T-cell (primary cell): ENCODE measurements at regions of chr1 and their contacts with region 1.

Region 1: GRCh38 chr1:86704458-86704971 is at the start of gene SH3GLB1:
- DNase-seq: peak; percentile 79 to 94 (median 87)
- ATAC-seq: peak; percentile 91 to 93 (median 92)
- H3K4me3 ChIP-seq: peak within 1 kb of the TSS; percentile 93 to 99
- H3K4me3 Mint-ChIP-seq: peak within 1 kb of the TSS; percentile 90 to 98 (median 98)
- H3K27ac ChIP-seq: peak within 1 kb of the TSS; percentile 87
- H3K27ac Mint-ChIP-seq: peak within 1 kb of the TSS; percentile 96 to 97
- H3K4me1 ChIP-seq: peaks cover 4 to 17% of the 10 kb centered on the region in 2 experiments
- H3K4me1 Mint-ChIP-seq: peaks cover 48 to 65% (median 55%) of the 10 kb centered on the region in 3 donors
- H3K27me3 ChIP-seq: no peaks in the 10 kb centered on the region
- H3K27me3 Mint-ChIP-seq: no peaks in the 10 kb centered on the region
- total RNA-seq, gene SH3GLB1: 42.2 to 48.0 (median 45.8) TPM

Region 2: DNA sequence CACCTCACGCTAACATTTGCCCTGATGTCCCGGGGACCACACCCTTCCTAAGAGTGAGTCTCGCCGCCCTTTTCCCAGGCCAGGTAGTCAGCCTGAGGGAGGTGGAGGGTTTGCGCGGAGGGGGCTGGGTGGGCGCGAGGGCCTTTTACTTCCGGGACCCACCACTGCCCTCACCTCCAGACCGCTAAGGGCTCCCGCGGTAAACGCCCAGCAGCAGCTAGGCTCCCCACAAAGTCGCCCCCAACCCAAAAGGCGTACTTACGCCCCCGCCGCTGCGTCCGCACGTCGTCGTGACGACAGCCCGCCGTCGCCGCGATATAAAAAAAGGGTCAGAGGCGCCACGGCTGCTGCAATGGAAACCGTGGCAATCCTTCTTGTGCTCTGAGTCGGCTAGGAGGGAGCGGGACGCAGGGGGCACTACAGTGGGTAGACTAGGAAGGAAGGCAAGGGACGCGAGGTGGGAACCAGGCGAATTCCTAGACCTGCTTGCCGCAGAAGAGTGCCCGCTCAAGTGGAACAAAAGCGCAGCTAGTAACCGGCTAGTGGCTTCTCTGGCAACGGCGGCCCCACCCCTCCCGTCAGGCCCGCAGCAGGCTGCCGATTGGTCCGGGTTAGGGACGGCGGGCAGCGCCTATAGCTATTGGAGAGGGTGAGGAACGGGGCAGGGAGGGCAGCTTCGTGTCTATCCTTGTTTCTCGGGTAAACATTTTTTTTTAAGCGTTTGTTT is 308.6 kb before region 1 on chr1 and contains the start of gene ODF2L:
- CTCF ChIA-PET with region 1: interaction called in 1 of 2 experiments, 18 read pairs
- POLR2A ChIA-PET with region 1: interaction called in 1 of 2 experiments, 10 read pairs
- DNase-seq: peak; percentile 73 to 92 (median 85)
- ATAC-seq: peak; percentile 99 to 100 (median 100)
- H3K4me3 ChIP-seq: peak within 1 kb of the TSS; percentile 93 to 98
- H3K4me3 Mint-ChIP-seq: peak within 1 kb of the TSS; percentile 91 to 98 (median 95)
- H3K27ac ChIP-seq: peak within 1 kb of the TSS; percentile 94
- H3K27ac Mint-ChIP-seq: peak within 1 kb of the TSS; percentile 93 to 97
- H3K4me1 ChIP-seq: peaks cover 7 to 19% of the 10 kb centered on the region in 2 experiments
- H3K4me1 Mint-ChIP-seq: peaks cover 53 to 57% (median 54%) of the 10 kb centered on the region in 3 donors
- H3K27me3 ChIP-seq: no peaks in the 10 kb centered on the region
- H3K27me3 Mint-ChIP-seq: no peaks in the 10 kb centered on the region
- total RNA-seq, gene ODF2L: 52.5 to 83.9 (median 67.9) TPM

Region 3: DNA sequence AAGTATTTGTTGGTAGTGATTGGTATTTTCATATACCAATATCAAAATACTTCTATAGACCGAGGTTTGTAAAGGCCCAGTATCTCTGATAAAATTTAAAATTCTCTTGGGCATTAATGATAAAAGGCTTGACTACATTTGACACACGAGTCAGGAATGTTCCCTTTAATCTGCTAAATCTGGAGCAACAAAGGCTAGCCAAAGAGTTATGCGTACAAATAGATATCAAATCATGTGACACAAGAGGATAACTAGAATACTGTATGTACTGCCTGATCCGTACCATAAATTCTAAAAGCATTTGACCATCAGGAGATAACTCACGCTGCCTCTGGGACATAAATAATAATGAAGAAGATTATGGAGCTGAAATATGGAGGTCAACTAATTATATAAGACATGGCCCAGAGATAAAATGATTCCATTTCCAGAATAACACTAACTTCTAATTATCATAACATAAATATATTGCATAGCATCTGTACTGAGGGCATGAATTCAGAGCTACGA is 64.3 kb before region 1 on chr1:
- CTCF ChIA-PET with region 1: no interaction called
- POLR2A ChIA-PET with region 1: no interaction called
- DNase-seq: no peak
- ATAC-seq: no peak
- H3K4me3 ChIP-seq: no peak overlapping the region
- H3K4me3 Mint-ChIP-seq: no peak overlapping the region
- H3K27ac ChIP-seq: no peak overlapping the region
- H3K27ac Mint-ChIP-seq: no peak overlapping the region
- H3K4me1 ChIP-seq: no peaks in the 10 kb centered on the region
- H3K4me1 Mint-ChIP-seq: no peaks in the 10 kb centered on the region
- H3K27me3 ChIP-seq: peaks cover 0 to 3% of the 10 kb centered on the region in 2 experiments
- H3K27me3 Mint-ChIP-seq: peaks cover 3 to 6% of the 10 kb centered on the region in 2 donors

Region 4: GRCh38 chr1:86741947-86742572 is 37.5 kb after region 1 on chr1:
- CTCF ChIA-PET with region 1: interaction called, 7 to 13 read pairs
- POLR2A ChIA-PET with region 1: interaction called, 4 to 5 read pairs
- DNase-seq: peak in 30 of 35 experiments; percentile 4 to 73 (median 30)
- ATAC-seq: no peak
- H3K4me3 ChIP-seq: no peak overlapping the region
- H3K4me3 Mint-ChIP-seq: no peak overlapping the region
- H3K27ac ChIP-seq: no peak overlapping the region
- H3K27ac Mint-ChIP-seq: no peak overlapping the region
- H3K4me1 ChIP-seq: peaks cover 5 to 14% of the 10 kb centered on the region in 2 experiments
- H3K4me1 Mint-ChIP-seq: peaks cover 0 to 4% (median 0%) of the 10 kb centered on the region in 3 donors
- H3K27me3 ChIP-seq: no peaks in the 10 kb centered on the region
- H3K27me3 Mint-ChIP-seq: no peaks in the 10 kb centered on the region

Region 5: GRCh38 chr1:86913896-86914634 is 209.6 kb after region 1 on chr1 and contains the start of gene SELENOF:
- CTCF ChIA-PET with region 1: interaction called, 7 to 43 read pairs
- POLR2A ChIA-PET with region 1: interaction called in 1 of 2 experiments, 4 read pairs
- DNase-seq: peak; percentile 97 to 100 (median 99)
- ATAC-seq: peak; percentile 88 to 90 (median 90)
- H3K4me3 ChIP-seq: peak within 1 kb of the TSS; percentile 90 to 100
- H3K4me3 Mint-ChIP-seq: no peak within 1 kb of the TSS
- H3K27ac ChIP-seq: peak within 1 kb of the TSS; percentile 92
- H3K27ac Mint-ChIP-seq: no peak within 1 kb of the TSS
- H3K4me1 ChIP-seq: peaks cover 17 to 22% of the 10 kb centered on the region in 2 experiments
- H3K4me1 Mint-ChIP-seq: peaks cover 5 to 54% (median 52%) of the 10 kb centered on the region in 3 donors
- H3K27me3 ChIP-seq: no peaks in the 10 kb centered on the region
- H3K27me3 Mint-ChIP-seq: no peaks in the 10 kb centered on the region
- total RNA-seq, gene SELENOF: 141 to 165 (median 145) TPM